ENCODE measurements at regions of chr11 and their contacts with region 1.

Region 1: DNA sequence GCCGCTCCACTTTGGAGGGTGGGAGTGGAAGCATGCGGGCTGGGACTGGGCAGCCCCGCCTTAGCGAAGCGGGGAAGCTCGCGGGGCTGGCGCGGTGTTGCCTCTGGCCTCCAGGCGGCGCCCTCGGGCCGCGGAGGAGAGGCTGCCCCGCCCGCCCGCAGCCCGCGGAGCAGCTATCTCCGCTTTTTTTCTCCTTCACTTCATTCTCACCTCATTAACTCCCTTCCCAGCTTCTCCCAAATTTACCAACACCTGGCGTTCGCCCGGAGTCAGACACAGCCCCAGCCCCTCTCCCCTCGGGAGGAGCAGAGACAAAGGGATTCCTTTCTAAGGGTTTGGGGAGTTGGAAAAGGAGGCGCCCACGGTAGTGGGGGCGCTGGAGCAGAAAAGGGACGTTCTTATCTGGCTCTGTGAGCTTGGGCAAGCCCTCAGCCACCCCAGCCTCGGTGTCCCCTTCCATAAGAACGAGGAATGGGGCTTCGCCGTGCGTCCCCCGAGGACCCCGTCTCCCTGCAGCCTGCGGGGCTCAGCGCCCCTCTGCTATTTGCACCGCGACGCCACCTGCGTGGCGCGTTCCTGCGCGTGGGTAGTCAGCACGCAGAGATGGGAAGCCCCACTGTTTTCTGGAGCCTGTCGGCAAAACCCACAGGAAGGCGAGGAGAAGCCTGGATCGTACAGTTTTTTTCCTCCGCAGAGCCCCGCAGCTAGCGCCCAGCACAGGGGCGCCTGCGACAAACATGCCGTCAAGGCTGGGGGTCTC is 1.5 kb upstream of the WNT11 start:
- DNase-seq: peak; percentile 84 to 95
- H3K4me3 ChIP-seq: peak overlapping the region; percentile 53 to 64 (median 56)
- H3K27ac ChIP-seq: peak overlapping the region in 1 of 5 donors; percentile 70
- H3K4me1 ChIP-seq: peaks cover 54 to 64% (median 60%) of the 10 kb centered on the region in 4 donors
- H3K27me3 ChIP-seq: peaks cover 5 to 99% (median 77%) of the 10 kb centered on the region in 3 donors
- CTCF ChIP-seq: peak in 5 of 7 experiments; percentile 85 to 97 (median 89)
- EP300 ChIP-seq: no peak
- POLR2A ChIP-seq: no peak

Region 2: GRCh38 chr11:76318744-76319384 is 111.0 kb after region 1 on chr11:
- intact Hi-C with region 1: loop called (anchors 2 kb)
- DNase-seq: peak; percentile 90 to 93
- H3K4me3 ChIP-seq: no peak overlapping the region
- H3K27ac ChIP-seq: no peak overlapping the region
- H3K4me1 ChIP-seq: peaks cover 8 to 11% (median 10%) of the 10 kb centered on the region in 4 donors
- H3K27me3 ChIP-seq: peaks cover 0 to 48% (median 20%) of the 10 kb centered on the region in 3 donors
- CTCF ChIP-seq: peak in 5 of 7 experiments; percentile 82 to 93 (median 90)
- EP300 ChIP-seq: no peak
- POLR2A ChIP-seq: no peak